HepG2 (cell line): ENCODE measurements at regions of chr17 and their contacts with region 1.

Region 1: GRCh38 chr17:40340880-40341807 is 23.4 kb downstream of the GJD3 start:
- DNase-seq: peak; percentile 83
- ATAC-seq: peak; percentile 68
- H3K4me3 ChIP-seq: peak overlapping the region; percentile 79 to 88 (median 84)
- H3K27ac ChIP-seq: peak overlapping the region; percentile 64
- H3K4me1 ChIP-seq: peaks cover 45% of the 10 kb centered on the region
- H3K27me3 ChIP-seq: no peaks in the 10 kb centered on the region
- CTCF ChIP-seq: peak; percentile 67
- EP300 ChIP-seq: no peak
- POLR2A ChIP-seq: no peak
- RAD21 ChIP-seq: peak; percentile 68

Region 2: GRCh38 chr17:40309031-40309948 is 31.9 kb before region 1 on chr17 and contains the start of gene RARA:
- CTCF ChIA-PET with region 1: no interaction called
- POLR2A ChIA-PET with region 1: interaction called, 35 read pairs
- in situ Hi-C with region 1: no loop called
- intact Hi-C with region 1: no loop called
- DNase-seq: peak; percentile 51
- ATAC-seq: peak; percentile 74
- H3K4me3 ChIP-seq: peak within 1 kb of the TSS; percentile 78 to 89 (median 88)
- H3K27ac ChIP-seq: no peak within 1 kb of the TSS
- H3K4me1 ChIP-seq: peaks cover 76% of the 10 kb centered on the region
- H3K27me3 ChIP-seq: no peaks in the 10 kb centered on the region; a peak in 1 of 5 replicates
- CTCF ChIP-seq: no peak; the same call in 1 of the 2 replicates
- EP300 ChIP-seq: no peak
- POLR2A ChIP-seq: no peak
- RAD21 ChIP-seq: peak; percentile 35
- total RNA-seq, gene RARA: 8.6 and 8.9 TPM in 2 replicates

Region 3: GRCh38 chr17:40317880-40318829 is 23.0 kb before region 1 on chr17:
- CTCF ChIA-PET with region 1: no interaction called
- POLR2A ChIA-PET with region 1: interaction called, 45 read pairs
- in situ Hi-C with region 1: no loop called
- intact Hi-C with region 1: loop called (anchors 2 kb)
- DNase-seq: peak; percentile 91
- ATAC-seq: peak; percentile 90
- H3K4me3 ChIP-seq: peak overlapping the region; percentile 86 to 95 (median 86)
- H3K27ac ChIP-seq: peak overlapping the region; percentile 29
- H3K4me1 ChIP-seq: peaks cover 89% of the 10 kb centered on the region
- H3K27me3 ChIP-seq: no peaks in the 10 kb centered on the region; a peak in 1 of 5 replicates
- CTCF ChIP-seq: no peak; the same call in 1 of the 2 replicates
- EP300 ChIP-seq: no peak
- POLR2A ChIP-seq: peak; percentile 66 to 88
- RAD21 ChIP-seq: no peak

Region 4: GRCh38 chr17:40323391-40324381 is 17.5 kb before region 1 on chr17:
- CTCF ChIA-PET with region 1: no interaction called
- POLR2A ChIA-PET with region 1: interaction called, 48 read pairs
- in situ Hi-C with region 1: no loop called
- intact Hi-C with region 1: no loop called
- DNase-seq: no peak
- ATAC-seq: no peak
- H3K4me3 ChIP-seq: no peak overlapping the region
- H3K27ac ChIP-seq: no peak overlapping the region
- H3K4me1 ChIP-seq: peaks cover 91% of the 10 kb centered on the region
- H3K27me3 ChIP-seq: no peaks in the 10 kb centered on the region; a peak in 1 of 5 replicates
- CTCF ChIP-seq: no peak
- EP300 ChIP-seq: no peak
- POLR2A ChIP-seq: no peak
- RAD21 ChIP-seq: no peak

Region 5: GRCh38 chr17:40355123-40355803 is 14.1 kb after region 1 on chr17:
- CTCF ChIA-PET with region 1: interaction called, 3 read pairs
- POLR2A ChIA-PET with region 1: interaction called, 34 read pairs
- in situ Hi-C with region 1: no loop called
- intact Hi-C with region 1: no loop called
- DNase-seq: peak; percentile 58
- ATAC-seq: peak; percentile 74
- H3K4me3 ChIP-seq: no peak overlapping the region
- H3K27ac ChIP-seq: no peak overlapping the region
- H3K4me1 ChIP-seq: peaks cover 55% of the 10 kb centered on the region
- H3K27me3 ChIP-seq: no peaks in the 10 kb centered on the region; a peak in 1 of 5 replicates
- CTCF ChIP-seq: peak; percentile 100
- EP300 ChIP-seq: peak in 1 of 2 experiments; percentile 46; a peak in 1 of 4 replicates
- POLR2A ChIP-seq: no peak
- RAD21 ChIP-seq: peak; percentile 100

Region 6: GRCh38 chr17:40433551-40434415 is 92.6 kb after region 1 on chr17:
- CTCF ChIA-PET with region 1: no interaction called
- POLR2A ChIA-PET with region 1: no interaction called
- in situ Hi-C with region 1: no loop called
- intact Hi-C with region 1: no loop called
- DNase-seq: no peak
- ATAC-seq: peak; percentile 90
- H3K4me3 ChIP-seq: no peak overlapping the region
- H3K27ac ChIP-seq: no peak overlapping the region
- H3K4me1 ChIP-seq: peaks cover 8% of the 10 kb centered on the region; the same call in 1 of the 2 replicates
- H3K27me3 ChIP-seq: peaks cover 3 to 14% of the 10 kb centered on the region in 2 experiments; a peak in 3 of 5 replicates
- CTCF ChIP-seq: peak; percentile 75
- EP300 ChIP-seq: no peak
- POLR2A ChIP-seq: no peak
- RAD21 ChIP-seq: no peak